ENCODE measurements at regions of chr11 and their contacts with region 1.

Region 1: GRCh38 chr11:12599408-12600143 is 74.6 kb upstream of the TEAD1 start:
- DNase-seq: peak; percentile 18
- H3K4me3 Mint-ChIP-seq: no peak overlapping the region
- H3K27ac Mint-ChIP-seq: no peak overlapping the region
- H3K4me1 Mint-ChIP-seq: no peaks in the 10 kb centered on the region
- H3K27me3 Mint-ChIP-seq: peaks cover 10% of the 10 kb centered on the region

Region 2: DNA sequence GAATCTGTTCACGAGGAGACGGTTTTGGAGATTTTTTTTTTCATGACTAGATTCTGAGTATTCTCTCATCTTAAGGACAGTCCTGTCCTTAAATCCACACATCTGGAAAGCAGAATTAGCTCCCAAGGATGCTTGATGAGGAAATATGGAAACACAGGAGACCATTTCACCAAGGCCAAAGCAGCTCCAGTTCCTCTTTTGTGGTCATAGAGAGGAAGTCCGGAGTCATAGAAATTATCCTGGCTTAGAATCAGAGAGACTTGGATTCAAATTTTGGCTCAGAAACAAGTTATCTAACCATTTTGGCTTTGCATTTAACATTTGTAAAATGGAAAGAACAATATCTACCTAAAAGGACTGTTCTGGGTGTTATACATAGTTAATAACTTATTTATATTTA is 67.3 kb after region 1 on chr11:
- intact Hi-C with region 1: no loop called
- DNase-seq: no peak
- H3K4me3 Mint-ChIP-seq: no peak overlapping the region
- H3K27ac Mint-ChIP-seq: no peak overlapping the region
- H3K4me1 Mint-ChIP-seq: no peaks in the 10 kb centered on the region
- H3K27me3 Mint-ChIP-seq: peaks cover 43% of the 10 kb centered on the region

Region 3: DNA sequence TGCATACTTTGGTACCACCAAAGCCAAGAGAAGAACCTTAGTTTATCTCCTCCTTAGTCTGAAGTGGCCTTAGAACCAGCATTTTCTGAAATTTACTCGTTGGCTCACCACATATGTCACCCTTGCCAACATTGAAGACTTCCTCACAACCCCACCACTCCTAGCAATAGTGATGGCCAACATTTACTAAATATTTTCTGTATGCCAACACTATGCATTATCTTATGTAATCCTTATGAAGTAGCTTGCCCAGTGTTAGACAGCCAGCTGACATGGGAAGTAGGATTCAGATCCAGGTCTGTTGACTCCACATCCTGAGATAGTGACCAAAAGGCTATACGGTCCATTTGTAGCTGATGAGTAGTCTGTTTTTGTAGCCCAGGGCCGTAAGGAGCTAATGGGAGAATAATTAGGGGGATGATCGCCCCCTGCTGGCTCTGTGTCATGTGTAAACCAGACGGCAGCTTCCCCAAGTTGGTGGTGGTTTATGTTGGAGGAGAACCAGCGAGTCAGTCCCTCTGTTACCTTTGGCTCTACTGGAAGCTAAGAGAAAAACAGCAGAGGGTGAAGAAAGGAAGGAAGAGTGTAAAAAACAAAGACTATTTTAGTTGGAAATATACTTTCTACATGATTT is 289.1 kb after region 1 on chr11:
- intact Hi-C with region 1: loop called (anchors 2 kb)
- DNase-seq: peak; percentile 33
- H3K4me3 Mint-ChIP-seq: no peak overlapping the region
- H3K27ac Mint-ChIP-seq: no peak overlapping the region
- H3K4me1 Mint-ChIP-seq: no peaks in the 10 kb centered on the region
- H3K27me3 Mint-ChIP-seq: peaks cover 8% of the 10 kb centered on the region